ENCODE measurements at regions of chr14 and their contacts with region 1.

Region 1: GRCh38 chr14:45156060-45156459 is 20.3 kb downstream of the FANCM start:
- DNase-seq: no peak
- H3K4me3 ChIP-seq: no peak overlapping the region
- H3K27ac ChIP-seq: no peak overlapping the region
- H3K4me1 ChIP-seq: no peaks in the 10 kb centered on the region
- CTCF ChIP-seq: no peak

Region 2: GRCh38 chr14:45103806-45104205 is 52.3 kb before region 1 on chr14:
- CTCF ChIA-PET with region 1: no interaction called
- POLR2A ChIA-PET with region 1: no interaction called
- intact Hi-C with region 1: no loop called
- DNase-seq: no peak
- H3K4me3 ChIP-seq: no peak overlapping the region
- H3K27ac ChIP-seq: no peak overlapping the region
- H3K4me1 ChIP-seq: no peaks in the 10 kb centered on the region
- CTCF ChIP-seq: no peak

Region 3: GRCh38 chr14:45144658-45145057 is 11.4 kb before region 1 on chr14:
- CTCF ChIA-PET with region 1: no interaction called
- POLR2A ChIA-PET with region 1: interaction called, 15 read pairs
- intact Hi-C with region 1: no loop called
- DNase-seq: no peak
- H3K4me3 ChIP-seq: no peak overlapping the region
- H3K27ac ChIP-seq: no peak overlapping the region
- H3K4me1 ChIP-seq: peaks cover 16% of the 10 kb centered on the region
- CTCF ChIP-seq: no peak

Region 4: DNA sequence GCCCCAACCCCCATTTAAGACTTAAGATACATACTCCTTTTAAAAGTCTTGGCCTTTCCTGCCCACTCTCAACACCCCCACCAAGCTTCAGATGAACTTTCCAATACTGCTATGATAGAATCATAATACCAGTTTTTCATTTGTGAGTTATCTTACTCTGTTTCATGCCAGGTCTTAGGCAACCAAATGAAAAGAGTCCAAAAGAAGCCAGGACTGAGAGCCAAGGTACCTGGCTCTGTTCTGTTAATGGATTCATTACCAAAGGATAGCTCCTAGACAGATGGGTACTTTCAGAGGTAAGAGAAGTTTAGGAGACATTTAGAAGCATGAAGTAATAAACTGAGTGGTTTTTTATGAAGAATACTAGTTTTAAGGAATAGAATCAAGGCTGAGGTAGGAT is 13.8 kb after region 1 on chr14:
- CTCF ChIA-PET with region 1: no interaction called
- POLR2A ChIA-PET with region 1: interaction called, 13 read pairs
- intact Hi-C with region 1: no loop called
- DNase-seq: no peak
- H3K4me3 ChIP-seq: no peak overlapping the region
- H3K27ac ChIP-seq: no peak overlapping the region
- H3K4me1 ChIP-seq: no peaks in the 10 kb centered on the region
- CTCF ChIP-seq: no peak